Heart right ventricle (tissue), 16 donors: ENCODE measurements at regions of chr22 and their contacts with region 1.

Region 1: DNA sequence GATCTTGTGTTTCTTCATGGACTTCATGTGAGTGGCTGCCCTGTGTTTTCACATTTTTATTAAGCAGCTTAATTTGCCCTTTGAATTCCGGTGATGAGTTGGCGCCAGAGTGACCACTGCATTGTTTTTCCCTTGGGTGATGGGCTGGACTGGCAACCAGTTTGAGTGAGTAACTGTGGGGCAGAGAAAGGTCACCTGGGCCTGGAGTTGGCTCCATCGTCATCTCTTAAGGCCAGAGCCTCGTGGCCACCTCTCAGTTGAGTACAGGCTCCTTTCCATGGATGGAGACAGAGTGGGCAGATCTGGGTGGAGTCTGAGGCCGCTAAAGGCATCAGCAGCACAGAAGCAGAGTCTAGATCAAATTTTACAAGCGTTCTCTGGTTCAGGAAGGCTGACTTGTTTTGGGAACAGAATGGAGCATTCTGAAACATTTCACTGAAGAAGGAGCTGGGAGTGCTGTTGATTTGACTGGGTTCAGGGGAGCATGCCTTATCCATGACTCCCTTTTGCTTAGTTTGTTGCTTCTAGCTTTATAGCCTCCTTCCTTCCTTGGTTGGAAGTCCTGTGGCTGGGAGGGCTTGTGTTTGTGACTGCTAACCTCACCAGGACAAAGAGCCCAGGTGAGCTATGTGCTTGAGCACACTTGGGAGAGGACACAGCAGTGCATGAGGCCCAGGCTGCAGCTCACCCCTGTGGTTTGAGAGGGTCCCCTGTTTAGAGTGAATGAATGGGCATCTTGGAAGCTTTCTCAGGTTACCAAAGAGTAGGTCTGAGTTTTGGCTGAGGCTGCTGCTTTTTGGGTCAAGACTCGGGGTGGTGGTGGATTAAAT is 7.8 kb downstream of the BCR start:
- DNase-seq: no peak
- ATAC-seq: peak in 1 of 8 donors; percentile 24
- H3K4me3 ChIP-seq: no peak overlapping the region
- H3K27ac ChIP-seq: no peak overlapping the region
- H3K4me1 ChIP-seq: peaks cover 0 to 64% (median 43%) of the 10 kb centered on the region in 9 donors
- H3K27me3 ChIP-seq: no peaks in the 10 kb centered on the region
- CTCF ChIP-seq: no peak

Region 2: DNA sequence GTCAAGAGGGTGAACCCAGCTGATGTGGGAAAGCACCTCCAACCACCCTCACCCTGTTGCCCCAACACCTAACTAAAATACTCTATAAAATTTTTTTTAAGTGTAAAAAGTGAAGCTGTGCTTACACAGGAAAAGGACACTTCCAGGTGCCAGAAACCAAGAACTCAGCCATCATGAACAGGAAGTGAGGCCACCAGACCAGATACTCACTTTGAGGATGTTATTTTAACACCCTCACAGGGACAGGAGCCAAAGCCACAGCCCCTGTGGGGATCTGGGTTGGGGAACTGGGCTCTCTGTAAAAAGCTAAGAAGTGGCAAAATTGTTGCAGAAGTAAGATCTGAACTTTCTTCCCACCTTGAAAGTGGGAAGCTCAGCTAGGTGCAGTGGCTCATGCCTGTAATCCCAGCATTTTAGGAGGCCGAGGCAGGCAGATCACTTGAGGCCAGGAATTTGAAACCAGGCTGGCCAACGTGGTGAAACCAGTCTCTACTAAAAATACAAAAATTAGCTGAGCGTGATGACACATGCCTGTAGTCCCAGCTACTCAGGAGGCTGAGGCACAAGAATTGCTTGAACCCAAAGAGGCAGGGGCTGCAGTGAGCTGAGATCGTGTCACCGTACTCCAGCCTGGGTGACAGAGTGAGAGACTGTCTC is 50.1 kb before region 1 on chr22:
- intact Hi-C with region 1: no loop called
- DNase-seq: peak in 1 of 2 donors; percentile 23
- ATAC-seq: peak in 1 of 8 donors; percentile 21
- H3K4me3 ChIP-seq: no peak overlapping the region
- H3K27ac ChIP-seq: peak overlapping the region in 2 of 10 donors; percentile 22 to 75
- H3K4me1 ChIP-seq: peaks cover 0 to 43% (median 18%) of the 10 kb centered on the region in 9 donors
- H3K27me3 ChIP-seq: no peaks in the 10 kb centered on the region
- CTCF ChIP-seq: no peak

Region 3: GRCh38 chr22:23199159-23199558 is 11.1 kb after region 1 on chr22:
- intact Hi-C with region 1: loop called in 1 of 10 experiments (anchors 2 kb)
- DNase-seq: no peak
- ATAC-seq: peak in 3 of 8 donors; percentile 23 to 38 (median 38)
- H3K4me3 ChIP-seq: no peak overlapping the region
- H3K27ac ChIP-seq: peak overlapping the region in 3 of 10 donors; percentile 7 to 61 (median 44)
- H3K4me1 ChIP-seq: peaks cover 0 to 61% (median 36%) of the 10 kb centered on the region in 9 donors
- H3K27me3 ChIP-seq: no peaks in the 10 kb centered on the region
- CTCF ChIP-seq: no peak

Region 4: DNA sequence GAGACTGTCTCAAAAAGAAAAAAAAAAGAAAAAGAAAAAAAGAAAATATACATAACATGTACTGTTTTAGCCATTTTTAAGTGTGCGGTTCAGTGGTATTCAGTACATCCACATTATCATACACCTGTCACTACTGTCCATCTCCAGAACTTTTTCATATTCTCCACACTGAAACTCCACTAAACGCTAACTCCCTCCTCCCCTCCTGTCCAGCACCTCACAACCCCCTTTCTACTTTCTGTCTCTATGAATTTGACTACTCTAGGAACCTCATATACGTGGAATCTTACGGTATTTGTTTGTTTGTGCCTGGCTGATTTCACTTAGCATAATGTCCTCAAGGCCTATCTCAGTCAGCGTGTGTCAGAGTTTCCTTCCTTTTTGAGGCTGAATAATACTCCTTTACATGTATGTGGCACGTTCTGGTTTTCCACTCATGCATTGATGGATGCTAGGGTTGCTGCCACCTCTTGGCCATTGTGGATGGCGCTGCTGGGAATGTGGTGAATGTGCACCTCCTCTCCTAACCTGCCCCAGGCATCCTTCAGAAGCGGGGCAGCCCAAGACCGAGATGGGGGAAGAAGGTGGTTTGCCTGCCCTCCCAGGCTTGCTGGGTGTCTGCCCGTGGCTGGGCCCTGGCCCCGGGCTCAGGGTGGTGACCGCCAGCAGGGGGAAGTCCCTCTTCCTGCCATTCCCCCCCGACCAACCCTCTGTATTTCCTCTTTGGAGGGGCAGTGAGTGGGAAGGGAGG is 52.7 kb after region 1 on chr22:
- intact Hi-C with region 1: loop called in 4 of 10 experiments (anchors 5 to 10 kb)
- DNase-seq: no peak
- ATAC-seq: no peak
- H3K4me3 ChIP-seq: no peak overlapping the region
- H3K27ac ChIP-seq: no peak overlapping the region
- H3K4me1 ChIP-seq: peaks cover 17 to 66% (median 28%) of the 10 kb centered on the region in 9 donors
- H3K27me3 ChIP-seq: no peaks in the 10 kb centered on the region
- CTCF ChIP-seq: peak in 5 of 9 donors; percentile 31 to 47 (median 44)